ENCODE measurements at regions of chr17 and their contacts with region 1.

Region 1: DNA sequence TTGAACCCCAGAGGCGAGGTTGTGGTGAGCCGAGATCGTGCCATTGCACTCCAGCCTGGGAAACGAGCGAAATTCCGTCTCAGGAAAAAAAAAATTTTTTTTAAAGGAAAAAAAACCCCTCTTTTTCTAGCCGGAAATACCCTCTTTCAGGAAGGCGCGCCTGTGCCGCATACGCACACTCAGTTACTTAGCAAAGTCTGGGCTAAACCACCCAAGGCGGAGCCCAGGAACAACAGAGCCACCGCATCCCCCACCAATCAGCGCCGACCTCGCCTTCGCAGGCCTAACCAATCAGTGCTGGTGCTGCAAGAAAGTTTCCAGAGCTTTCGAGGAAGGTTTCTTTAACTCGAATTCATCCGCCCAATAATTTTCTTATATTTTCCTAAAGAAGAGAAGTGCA is 510.4 kb downstream of the KCNJ18 start:
- DNase-seq: no peak
- ATAC-seq: no peak
- H3K4me3 ChIP-seq: no peak overlapping the region
- H3K27ac ChIP-seq: no peak overlapping the region
- H3K4me1 ChIP-seq: no peaks in the 10 kb centered on the region
- H3K27me3 ChIP-seq: no peaks in the 10 kb centered on the region
- CTCF ChIP-seq: no peak

Region 2: DNA sequence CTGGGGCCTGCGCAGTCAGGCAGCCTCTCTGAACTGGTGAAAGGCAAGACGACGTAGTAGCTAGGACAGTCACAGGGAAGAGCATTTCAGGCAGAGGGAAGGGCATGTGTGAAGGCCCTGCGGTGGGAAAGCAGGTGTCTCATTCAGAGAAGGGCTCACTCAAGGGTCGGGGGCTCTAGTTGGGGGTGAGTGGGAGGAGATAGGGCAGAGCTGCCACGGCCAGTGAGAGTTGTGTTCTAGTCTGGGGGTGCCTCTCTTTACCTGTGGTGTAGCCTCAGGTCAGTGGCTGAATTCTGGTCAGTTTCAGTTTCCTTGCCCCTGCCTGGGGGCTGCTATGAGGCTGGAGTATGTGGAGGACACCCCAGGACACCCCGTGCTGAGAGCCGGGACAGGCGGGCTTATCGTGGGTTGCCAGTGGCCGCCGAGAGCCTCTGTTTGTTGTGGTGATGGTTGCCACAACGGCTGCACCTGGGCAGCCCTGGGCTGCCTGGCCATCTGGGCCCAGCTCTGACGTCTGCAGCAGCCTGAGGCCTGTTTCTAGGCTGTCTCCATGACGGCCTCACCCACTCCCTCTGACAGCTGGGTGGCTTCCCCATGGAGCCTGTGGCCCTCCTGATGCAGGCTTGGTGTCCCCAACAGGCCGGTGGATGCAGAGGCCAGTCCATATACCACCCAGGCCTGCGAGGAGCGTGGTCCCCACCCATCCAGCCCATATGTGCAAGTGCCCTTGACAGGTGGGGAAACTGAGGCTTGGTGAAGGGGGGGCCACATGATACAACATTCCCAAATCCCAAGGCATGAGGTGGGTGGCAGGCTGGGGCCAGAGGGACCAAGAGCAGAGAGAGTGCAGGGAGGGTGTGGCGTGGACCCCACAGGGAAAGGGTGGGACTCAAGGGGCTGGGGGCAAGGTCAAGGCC is 907.4 kb before region 1 on chr17:
- intact Hi-C with region 1: loop called in 1 of 2 experiments (anchors 10 kb)
- DNase-seq: peak in 1 of 2 donors; percentile 34
- ATAC-seq: peak; percentile 11 to 49 (median 42)
- H3K4me3 ChIP-seq: no peak overlapping the region
- H3K27ac ChIP-seq: peak overlapping the region; percentile 59
- H3K4me1 ChIP-seq: peaks cover 48% of the 10 kb centered on the region
- H3K27me3 ChIP-seq: peaks cover 0 to 1% (median 0%) of the 10 kb centered on the region in 3 donors
- CTCF ChIP-seq: no peak

Region 3: GRCh38 chr17:22233382-22233781 is 30.7 kb after region 1 on chr17:
- intact Hi-C with region 1: no loop called
- DNase-seq: no peak
- ATAC-seq: no peak
- H3K4me3 ChIP-seq: no peak overlapping the region
- H3K27ac ChIP-seq: no peak overlapping the region
- H3K4me1 ChIP-seq: no peaks in the 10 kb centered on the region
- H3K27me3 ChIP-seq: no peaks in the 10 kb centered on the region
- CTCF ChIP-seq: no peak

Measured in psoas muscle (tissue), 8 donors.